ENCODE measurements at regions of chr9 and their contacts with region 1.

Region 1: GRCh38 chr9:97615439-97616072 is 17.6 kb downstream of the TSTD2 start:
- DNase-seq: peak in 1 of 2 experiments; percentile 66
- H3K4me3 ChIP-seq: no peak overlapping the region
- H3K27ac ChIP-seq: no peak overlapping the region
- H3K4me1 ChIP-seq: no peaks in the 10 kb centered on the region
- H3K27me3 ChIP-seq: no peaks in the 10 kb centered on the region
- CTCF ChIP-seq: peak in 2 of 3 experiments; percentile 69 to 83; a peak in 3 of 4 replicates
- EP300 ChIP-seq: no peak
- POLR2A ChIP-seq: no peak
- RAD21 ChIP-seq: peak; percentile 76 to 84

Region 2: GRCh38 chr9:97459099-97459725 is 156.3 kb before region 1 on chr9:
- CTCF ChIA-PET with region 1: interaction called, 17 read pairs
- POLR2A ChIA-PET with region 1: no interaction called
- DNase-seq: no peak
- H3K4me3 ChIP-seq: no peak overlapping the region
- H3K27ac ChIP-seq: no peak overlapping the region
- H3K4me1 ChIP-seq: peaks cover 0 to 4% (median 3%) of the 10 kb centered on the region in 4 experiments; a peak in 4 of 7 replicates
- H3K27me3 ChIP-seq: peaks cover 0 to 1% (median 0%) of the 10 kb centered on the region in 4 experiments; a peak in 1 of 7 replicates
- CTCF ChIP-seq: no peak
- EP300 ChIP-seq: no peak
- POLR2A ChIP-seq: no peak
- RAD21 ChIP-seq: no peak

Region 3: GRCh38 chr9:97518909-97519307 is 96.6 kb before region 1 on chr9:
- CTCF ChIA-PET with region 1: interaction called, 10 read pairs
- POLR2A ChIA-PET with region 1: no interaction called
- DNase-seq: no peak
- H3K4me3 ChIP-seq: no peak overlapping the region
- H3K27ac ChIP-seq: no peak overlapping the region
- H3K4me1 ChIP-seq: peaks cover 0 to 2% (median 0%) of the 10 kb centered on the region in 4 experiments; a peak in 1 of 7 replicates
- H3K27me3 ChIP-seq: no peaks in the 10 kb centered on the region; a peak in 1 of 7 replicates
- CTCF ChIP-seq: no peak
- EP300 ChIP-seq: no peak
- POLR2A ChIP-seq: no peak
- RAD21 ChIP-seq: no peak

Region 4: GRCh38 chr9:97632985-97633858 is 17.7 kb after region 1 on chr9 and contains the starts of genes NCBP1 and TSTD2:
- CTCF ChIA-PET with region 1: interaction called, 28 read pairs
- POLR2A ChIA-PET with region 1: interaction called, 8 read pairs
- DNase-seq: peak; percentile 84 to 93
- H3K4me3 ChIP-seq: peak within 1 kb of the TSS; percentile 70 to 91 (median 87)
- H3K27ac ChIP-seq: peak within 1 kb of the TSS; percentile 98
- H3K4me1 ChIP-seq: peaks cover 0 to 15% (median 4%) of the 10 kb centered on the region in 4 experiments; a peak in 6 of 7 replicates
- H3K27me3 ChIP-seq: no peaks in the 10 kb centered on the region
- CTCF ChIP-seq: no peak
- EP300 ChIP-seq: peak in 1 of 2 experiments; percentile 2; a peak in 1 of 3 replicates
- POLR2A ChIP-seq: peak; percentile 64 to 72
- RAD21 ChIP-seq: no peak
- total RNA-seq, gene NCBP1: 54.0 and 57.5 TPM in 2 replicates
- total RNA-seq, gene TSTD2: 16.1 and 16.3 TPM in 2 replicates

Measured in H1 (cell line).